ENCODE measurements at regions of chr11 and their contacts with region 1.

Region 1: DNA sequence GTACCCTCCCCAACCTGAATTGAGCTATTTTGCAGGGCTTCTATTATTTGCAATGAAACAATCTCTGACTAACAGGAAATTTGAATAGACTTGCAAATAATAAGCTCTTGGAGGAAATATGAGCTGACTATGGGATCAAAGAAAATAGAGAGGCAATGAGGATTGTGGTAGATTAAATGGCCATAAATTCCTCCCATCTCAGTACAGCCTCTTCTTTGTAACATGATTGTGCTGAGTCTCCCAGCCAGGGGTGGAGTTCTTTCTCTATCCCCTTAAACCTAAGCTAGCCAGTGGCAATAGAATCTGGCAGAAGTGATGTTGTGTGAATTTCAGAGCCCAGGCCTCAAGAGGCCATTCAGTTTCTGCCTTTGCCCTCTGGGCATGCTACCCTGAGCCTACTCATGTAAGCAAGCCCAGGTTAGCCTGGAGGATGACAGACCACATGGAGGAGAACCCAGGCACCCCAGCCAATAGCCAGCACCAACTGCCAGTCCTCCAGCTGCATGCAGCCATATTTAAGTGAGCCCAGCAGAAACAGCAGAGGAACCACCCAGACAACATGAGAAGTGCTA is 86.8 kb upstream of the TP53I11 start:
- DNase-seq: no peak
- H3K4me3 ChIP-seq: no peak overlapping the region
- H3K27ac ChIP-seq: no peak overlapping the region
- H3K4me1 ChIP-seq: no peaks in the 10 kb centered on the region
- H3K27me3 ChIP-seq: no peaks in the 10 kb centered on the region; a peak in 1 of 7 replicates
- CTCF ChIP-seq: no peak
- EP300 ChIP-seq: no peak
- POLR2A ChIP-seq: no peak
- RAD21 ChIP-seq: no peak

Region 2: GRCh38 chr11:44793350-44794090 is 244.0 kb before region 1 on chr11:
- CTCF ChIA-PET with region 1: no interaction called
- POLR2A ChIA-PET with region 1: no interaction called
- DNase-seq: no peak
- H3K4me3 ChIP-seq: no peak overlapping the region
- H3K27ac ChIP-seq: no peak overlapping the region
- H3K4me1 ChIP-seq: peaks cover 10 to 23% (median 17%) of the 10 kb centered on the region in 4 experiments
- H3K27me3 ChIP-seq: peaks cover 0 to 4% (median 0%) of the 10 kb centered on the region in 4 experiments; a peak in 1 of 7 replicates
- CTCF ChIP-seq: no peak
- EP300 ChIP-seq: no peak
- POLR2A ChIP-seq: no peak
- RAD21 ChIP-seq: no peak

Region 3: DNA sequence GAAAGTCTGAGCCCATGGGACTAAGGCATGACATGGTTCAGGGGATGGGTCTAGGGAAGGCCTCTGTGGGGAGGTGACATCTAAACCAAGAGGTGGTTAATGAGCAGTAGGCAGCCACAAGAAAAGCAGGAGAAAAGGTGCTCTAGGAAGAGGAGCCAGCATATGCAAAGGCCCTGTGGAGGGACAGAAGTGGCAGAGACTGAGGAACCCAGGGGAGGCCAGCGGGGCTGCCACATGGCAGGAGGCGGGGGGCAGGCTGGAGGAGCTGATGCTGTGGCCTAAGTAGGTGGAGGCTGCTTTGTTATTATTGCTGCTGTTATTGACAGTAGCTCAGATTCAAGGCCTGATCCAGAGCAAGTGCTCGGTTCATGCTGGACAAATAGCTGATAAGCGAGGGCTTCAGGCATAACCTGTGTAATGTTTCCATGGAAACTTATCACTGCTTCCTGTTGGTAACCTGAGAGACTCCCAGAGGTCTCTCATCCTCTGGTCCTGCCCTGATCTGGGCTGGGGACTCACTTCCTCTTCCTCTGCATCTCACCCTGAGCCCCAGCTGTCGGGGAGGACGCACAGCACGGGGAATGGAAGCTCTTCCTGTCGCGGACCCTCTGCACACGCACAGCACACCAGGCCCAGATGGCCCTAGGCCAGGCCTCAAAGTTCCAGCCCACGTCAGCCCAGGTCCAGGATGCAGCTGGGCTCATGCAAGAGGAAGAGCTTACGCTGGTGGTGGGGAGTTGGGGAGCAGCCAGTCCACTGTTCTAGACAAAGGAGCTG is 11.6 kb before region 1 on chr11:
- CTCF ChIA-PET with region 1: interaction called, 21 read pairs
- POLR2A ChIA-PET with region 1: no interaction called
- DNase-seq: no peak
- H3K4me3 ChIP-seq: no peak overlapping the region
- H3K27ac ChIP-seq: no peak overlapping the region
- H3K4me1 ChIP-seq: peaks cover 6 to 16% (median 11%) of the 10 kb centered on the region in 4 experiments; a peak in 6 of 7 replicates
- H3K27me3 ChIP-seq: no peaks in the 10 kb centered on the region
- CTCF ChIP-seq: no peak
- EP300 ChIP-seq: no peak
- POLR2A ChIP-seq: no peak
- RAD21 ChIP-seq: no peak